Tibial artery (tissue), 4 donors: ENCODE measurements at regions of chr16 and their contacts with region 1.

Region 1: DNA sequence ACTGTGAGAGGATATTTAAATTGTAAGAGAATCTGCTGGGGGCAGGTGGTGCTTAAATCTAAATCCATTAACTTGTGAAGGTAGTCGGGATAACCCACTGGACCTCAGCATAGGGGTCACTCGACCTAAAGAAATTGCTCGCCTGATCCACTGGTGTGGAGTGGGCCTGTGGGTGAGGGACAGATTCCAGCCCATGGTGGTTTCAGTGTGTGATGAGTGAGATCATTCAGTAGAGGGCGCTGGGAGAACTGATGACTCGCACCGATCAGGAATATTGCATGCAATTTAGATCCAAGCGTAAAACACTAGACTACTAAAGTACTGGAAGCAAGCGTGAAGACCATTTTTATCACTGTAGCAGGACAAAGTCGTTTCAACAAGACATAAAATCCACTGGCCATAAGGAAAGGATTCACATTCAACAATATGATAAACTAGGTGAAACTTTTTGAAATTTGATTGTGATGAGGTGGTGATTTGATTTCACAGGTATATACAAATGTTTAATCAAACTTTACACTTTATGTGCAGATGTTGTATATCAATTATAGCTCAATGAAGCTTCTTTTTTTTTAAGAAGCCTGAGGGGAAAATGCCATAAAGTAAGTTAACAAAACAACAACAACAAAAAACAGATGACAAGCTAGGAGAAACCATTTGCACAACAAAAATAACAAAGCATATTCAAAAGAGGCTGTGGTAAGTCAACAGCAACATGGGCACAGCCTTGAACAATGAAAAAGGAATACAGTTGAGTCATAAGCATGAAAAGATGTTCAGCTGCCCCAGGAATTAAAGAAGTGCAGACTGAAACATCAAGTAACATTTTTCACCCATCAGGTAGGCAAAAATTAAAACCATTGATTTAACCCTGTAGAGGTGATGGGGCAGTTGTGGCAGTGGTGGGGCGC is 7.5 kb upstream of the TMEM170A start:
- DNase-seq: peak; percentile 57 to 73
- H3K4me3 ChIP-seq: no peak overlapping the region
- H3K27ac ChIP-seq: no peak overlapping the region
- H3K4me1 ChIP-seq: no peaks in the 10 kb centered on the region
- H3K27me3 ChIP-seq: no peaks in the 10 kb centered on the region
- CTCF ChIP-seq: peak; percentile 73 to 87

Region 2: GRCh38 chr16:75519881-75520280 is 47.9 kb after region 1 on chr16:
- intact Hi-C with region 1: loop called (anchors 5 kb)
- DNase-seq: no peak
- H3K4me3 ChIP-seq: no peak overlapping the region
- H3K27ac ChIP-seq: no peak overlapping the region
- H3K4me1 ChIP-seq: peaks cover 0 to 10% (median 7%) of the 10 kb centered on the region in 4 donors
- H3K27me3 ChIP-seq: no peaks in the 10 kb centered on the region
- CTCF ChIP-seq: no peak

Region 3: GRCh38 chr16:75789237-75789636 is 317.3 kb after region 1 on chr16:
- intact Hi-C with region 1: no loop called
- DNase-seq: no peak
- H3K4me3 ChIP-seq: no peak overlapping the region
- H3K27ac ChIP-seq: no peak overlapping the region
- H3K4me1 ChIP-seq: no peaks in the 10 kb centered on the region
- H3K27me3 ChIP-seq: no peaks in the 10 kb centered on the region
- CTCF ChIP-seq: peak; percentile 75 to 76

Region 4: DNA sequence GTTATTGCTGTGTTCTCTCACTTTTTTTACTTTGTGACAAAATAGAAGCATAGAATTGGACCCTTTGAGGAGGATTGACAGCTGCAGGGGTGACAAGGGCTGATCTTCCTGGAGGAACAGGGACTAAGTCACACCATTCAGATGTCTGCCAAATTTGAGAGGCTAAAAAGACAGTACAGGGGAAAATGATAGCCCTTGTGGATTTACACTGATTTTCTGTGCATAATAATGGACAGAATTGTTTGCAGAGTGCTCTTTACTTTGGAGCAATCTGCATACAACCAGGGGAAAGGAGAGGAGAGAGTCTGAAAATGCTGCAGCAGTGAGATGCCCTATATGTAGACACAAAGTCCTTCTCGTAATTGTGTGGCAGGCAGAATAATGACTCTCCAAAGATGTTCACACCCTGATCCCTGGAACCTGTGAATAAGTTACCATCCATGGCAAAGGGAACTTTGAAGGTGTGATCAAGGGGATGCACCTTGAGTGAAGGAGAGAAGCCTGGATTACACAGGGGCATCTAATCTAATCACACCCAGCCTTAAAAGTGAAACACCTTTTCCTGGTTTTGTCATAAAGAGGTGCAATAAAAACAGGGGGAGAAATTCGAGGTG is 475.8 kb after region 1 on chr16:
- intact Hi-C with region 1: no loop called
- DNase-seq: no peak
- H3K4me3 ChIP-seq: no peak overlapping the region
- H3K27ac ChIP-seq: no peak overlapping the region
- H3K4me1 ChIP-seq: no peaks in the 10 kb centered on the region
- H3K27me3 ChIP-seq: no peaks in the 10 kb centered on the region
- CTCF ChIP-seq: no peak